Common myeloid progenitor, CD34-positive (primary cell): ENCODE measurements at regions of chr5 and their contacts with region 1.

Region 1: DNA sequence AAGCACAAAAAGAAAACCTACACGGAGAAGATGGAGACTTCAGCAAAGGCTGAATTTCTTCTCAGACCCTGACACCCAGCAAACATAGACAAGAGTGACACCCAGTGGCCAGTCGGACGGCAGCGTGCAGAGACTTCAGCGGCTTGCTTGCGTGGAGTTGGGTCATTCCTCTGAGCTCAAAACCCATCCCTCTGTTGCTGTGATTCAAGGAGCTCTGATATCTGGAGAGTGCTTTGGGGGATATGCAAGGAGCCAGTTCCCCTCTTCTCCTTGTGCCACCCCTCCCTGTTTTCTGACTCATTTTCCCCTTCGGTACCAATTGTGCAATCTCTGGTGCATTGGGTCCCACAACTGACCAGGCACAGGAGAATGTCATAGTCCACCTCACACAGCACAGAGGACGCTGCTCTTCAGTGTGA is 27.5 kb downstream of the SH3TC2 start:
- DNase-seq: peak; percentile 73 to 87 (median 83)
- H3K4me3 ChIP-seq: no peak overlapping the region
- H3K27ac ChIP-seq: no peak overlapping the region
- H3K4me1 ChIP-seq: peaks cover 21 to 51% (median 50%) of the 10 kb centered on the region in 4 experiments
- H3K27me3 ChIP-seq: no peaks in the 10 kb centered on the region

Region 2: GRCh38 chr5:148443998-148444397 is 591.4 kb before region 1 on chr5:
- CTCF ChIA-PET with region 1: interaction called, 16 read pairs
- POLR2A ChIA-PET with region 1: no interaction called
- DNase-seq: peak; percentile 65 to 83 (median 80)
- H3K4me3 ChIP-seq: no peak overlapping the region
- H3K27ac ChIP-seq: no peak overlapping the region
- H3K4me1 ChIP-seq: no peaks in the 10 kb centered on the region
- H3K27me3 ChIP-seq: no peaks in the 10 kb centered on the region

Region 3: GRCh38 chr5:148740966-148741742 is 294.2 kb before region 1 on chr5:
- CTCF ChIA-PET with region 1: interaction called, 210 read pairs
- POLR2A ChIA-PET with region 1: no interaction called
- DNase-seq: peak; percentile 72 to 81 (median 74)
- H3K4me3 ChIP-seq: no peak overlapping the region
- H3K27ac ChIP-seq: no peak overlapping the region
- H3K4me1 ChIP-seq: peaks cover 0 to 15% (median 3%) of the 10 kb centered on the region in 4 experiments
- H3K27me3 ChIP-seq: no peaks in the 10 kb centered on the region

Region 4: DNA sequence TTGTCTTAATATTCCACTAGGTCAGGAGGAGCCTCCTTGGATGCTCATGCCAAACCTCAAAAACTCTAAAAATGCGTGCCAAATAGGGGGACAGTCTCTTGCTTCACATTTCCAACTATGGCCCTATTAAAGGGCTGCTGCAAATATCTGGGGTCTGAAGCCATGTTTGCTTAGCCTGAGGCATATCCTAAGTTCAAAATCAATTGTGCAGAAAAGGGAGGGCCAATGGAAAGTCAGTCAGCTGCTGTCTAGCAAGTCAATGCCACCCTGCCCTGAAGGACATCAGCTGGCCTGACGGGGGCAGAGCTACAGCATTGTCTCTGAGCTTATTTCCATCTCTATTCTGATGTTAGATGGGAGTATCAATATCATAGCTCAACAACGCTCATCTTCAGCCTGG is 66.1 kb before region 1 on chr5:
- CTCF ChIA-PET with region 1: no interaction called
- POLR2A ChIA-PET with region 1: no interaction called
- DNase-seq: no peak
- H3K4me3 ChIP-seq: no peak overlapping the region
- H3K27ac ChIP-seq: no peak overlapping the region
- H3K4me1 ChIP-seq: peaks cover 3 to 10% (median 7%) of the 10 kb centered on the region in 4 experiments
- H3K27me3 ChIP-seq: no peaks in the 10 kb centered on the region

Region 5: DNA sequence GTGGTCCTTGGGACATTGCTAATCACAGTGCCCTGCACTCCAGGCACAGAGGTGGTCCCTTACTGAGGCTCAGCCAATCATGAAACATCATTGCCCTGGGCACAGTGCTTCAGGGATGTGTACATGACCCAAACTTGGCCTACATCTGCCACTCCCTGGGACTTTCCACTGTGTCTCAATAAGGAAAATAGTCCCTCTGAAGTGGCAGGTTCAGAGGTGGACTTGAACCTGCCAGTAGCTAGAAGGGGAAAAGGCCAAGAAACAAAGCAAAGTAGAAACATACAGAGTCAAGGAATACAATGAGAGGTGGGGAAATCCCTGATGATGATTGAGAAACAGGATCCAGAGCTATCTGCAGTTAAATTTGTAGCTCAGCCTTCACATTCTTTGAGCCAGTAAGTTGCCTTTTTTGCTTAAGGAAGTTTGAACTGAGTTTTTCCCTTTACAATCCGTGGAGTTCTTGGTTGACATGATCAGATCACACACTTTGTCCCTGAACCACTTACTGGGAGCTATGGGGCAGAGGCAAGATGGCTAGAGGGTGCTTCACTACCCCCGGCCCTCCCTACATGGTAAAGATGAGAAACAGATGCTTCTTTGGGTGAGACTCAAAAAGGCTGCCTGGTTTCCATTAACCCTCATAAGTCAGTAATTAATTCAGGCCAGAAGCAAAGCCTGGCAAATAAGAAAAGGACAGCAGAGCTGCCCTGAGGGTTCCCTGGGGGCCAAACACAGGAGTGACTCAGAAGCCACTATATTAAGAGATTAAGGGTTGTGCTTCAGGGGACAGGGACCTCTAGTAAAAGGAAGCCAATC is 30.1 kb before region 1 on chr5:
- CTCF ChIA-PET with region 1: interaction called, 37 read pairs
- POLR2A ChIA-PET with region 1: no interaction called
- DNase-seq: no peak
- H3K4me3 ChIP-seq: no peak overlapping the region
- H3K27ac ChIP-seq: no peak overlapping the region
- H3K4me1 ChIP-seq: no peaks in the 10 kb centered on the region
- H3K27me3 ChIP-seq: no peaks in the 10 kb centered on the region

Region 6: DNA sequence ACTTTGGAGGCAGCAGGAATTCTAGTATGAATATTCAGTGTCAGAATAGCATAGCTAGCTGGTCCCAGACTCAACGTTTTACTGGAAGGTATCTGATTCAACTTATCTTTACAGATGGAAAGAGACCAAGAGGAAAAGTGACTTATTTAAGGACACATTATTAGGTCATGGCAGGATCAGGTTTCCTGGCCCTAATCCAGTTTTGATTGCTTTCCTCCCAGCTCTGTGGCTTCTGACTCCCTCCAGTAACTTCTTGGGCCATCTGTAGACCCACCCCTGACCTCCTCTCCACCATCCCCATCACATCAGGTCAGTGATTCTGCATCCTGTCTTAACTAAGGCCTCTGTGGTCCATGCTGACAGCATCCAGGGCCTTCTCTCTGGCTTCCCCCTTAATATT is 10.9 kb before region 1 on chr5:
- CTCF ChIA-PET with region 1: interaction called, 12 read pairs
- POLR2A ChIA-PET with region 1: interaction called, 3 read pairs
- DNase-seq: no peak
- H3K4me3 ChIP-seq: no peak overlapping the region
- H3K27ac ChIP-seq: no peak overlapping the region
- H3K4me1 ChIP-seq: no peaks in the 10 kb centered on the region
- H3K27me3 ChIP-seq: no peaks in the 10 kb centered on the region

Region 7: DNA sequence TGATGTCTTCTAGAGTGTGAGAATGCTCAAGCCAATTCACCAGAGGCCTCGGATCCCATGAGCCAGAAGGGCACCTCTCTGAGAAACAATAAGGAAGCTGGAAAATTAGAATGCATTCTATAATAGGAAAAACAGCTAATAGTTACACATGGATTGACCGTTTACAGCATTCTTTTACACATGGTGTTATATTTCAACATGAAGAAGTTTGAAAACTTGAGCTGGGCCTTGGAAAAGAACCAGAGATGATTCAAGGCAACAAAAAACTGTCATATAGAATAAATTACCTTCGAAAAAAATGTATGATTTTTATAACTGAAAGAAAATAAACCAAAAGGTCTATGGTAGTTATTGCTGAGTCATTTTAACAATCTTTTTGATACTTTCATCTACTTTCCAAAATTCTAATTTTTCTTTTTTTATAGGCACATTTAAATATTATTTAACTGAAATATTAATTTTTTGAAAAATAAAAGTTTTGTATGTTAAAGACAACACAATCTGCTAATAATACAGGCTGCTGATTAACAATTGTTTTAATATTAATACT is 21.3 kb after region 1 on chr5:
- CTCF ChIA-PET with region 1: interaction called, 18 read pairs
- POLR2A ChIA-PET with region 1: no interaction called
- DNase-seq: no peak
- H3K4me3 ChIP-seq: no peak overlapping the region
- H3K27ac ChIP-seq: no peak overlapping the region
- H3K4me1 ChIP-seq: peaks cover 0 to 20% (median 17%) of the 10 kb centered on the region in 4 experiments
- H3K27me3 ChIP-seq: no peaks in the 10 kb centered on the region